Spleen (tissue), 13 donors: ENCODE measurements at regions of chr9 and their contacts with region 1.

Region 1: GRCh38 chr9:5437254-5438216 is at the start of gene PLGRKT:
- DNase-seq: peak; percentile 99
- H3K4me3 ChIP-seq: peak within 1 kb of the TSS; percentile 53 to 81 (median 63)
- H3K27ac ChIP-seq: peak within 1 kb of the TSS; percentile 91 to 97 (median 96)
- H3K4me1 ChIP-seq: peaks cover 17 to 40% (median 28%) of the 10 kb centered on the region in 6 donors
- H3K27me3 ChIP-seq: no peaks in the 10 kb centered on the region
- CTCF ChIP-seq: peak in 7 of 11 experiments; percentile 18 to 46 (median 41)
- POLR2A ChIP-seq: peak; percentile 52 to 86 (median 72)
- total RNA-seq, gene PLGRKT: 12.8 to 20.7 (median 17.5) TPM

Region 2: GRCh38 chr9:4740638-4741364 is 696.7 kb before region 1 on chr9 and contains the start of gene AK3:
- intact Hi-C with region 1: loop called (anchors 10 kb)
- DNase-seq: peak; percentile 98
- H3K4me3 ChIP-seq: peak within 1 kb of the TSS; percentile 55 to 94 (median 84)
- H3K27ac ChIP-seq: peak within 1 kb of the TSS; percentile 81 to 97 (median 92)
- H3K4me1 ChIP-seq: peaks cover 10 to 56% (median 38%) of the 10 kb centered on the region in 6 donors
- H3K27me3 ChIP-seq: no peaks in the 10 kb centered on the region
- CTCF ChIP-seq: peak in 6 of 11 experiments; percentile 13 to 45 (median 30)
- POLR2A ChIP-seq: peak in 2 of 3 donors; percentile 38 to 87
- total RNA-seq, gene AK3: 28.1 to 65.3 (median 51.3) TPM

Region 3: DNA sequence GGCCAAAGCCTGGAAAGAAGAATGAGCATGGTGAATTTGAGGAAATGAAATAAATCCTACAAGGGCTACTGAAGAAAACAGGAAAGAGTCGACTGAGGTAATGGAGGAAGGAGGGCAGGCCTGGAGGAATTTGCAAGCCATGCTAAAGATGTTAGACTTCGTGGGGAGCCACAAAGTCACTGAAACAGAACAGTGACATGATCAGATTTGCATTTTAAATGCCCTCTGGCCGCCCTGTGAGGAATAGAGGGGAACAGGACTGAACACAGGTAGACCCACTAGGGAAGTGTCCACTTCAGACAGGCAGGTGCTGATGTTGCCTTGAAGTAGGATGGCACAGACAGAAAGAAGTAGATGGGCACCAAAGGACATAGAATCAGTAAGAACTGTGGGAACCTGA is 55.1 kb before region 1 on chr9:
- intact Hi-C with region 1: no loop called
- DNase-seq: no peak
- H3K4me3 ChIP-seq: no peak overlapping the region
- H3K27ac ChIP-seq: no peak overlapping the region
- H3K4me1 ChIP-seq: no peaks in the 10 kb centered on the region
- H3K27me3 ChIP-seq: no peaks in the 10 kb centered on the region
- CTCF ChIP-seq: no peak
- POLR2A ChIP-seq: no peak

Region 4: GRCh38 chr9:5593904-5594303 is 156.4 kb after region 1 on chr9:
- intact Hi-C with region 1: loop called (anchors 5 kb)
- DNase-seq: no peak
- H3K4me3 ChIP-seq: no peak overlapping the region
- H3K27ac ChIP-seq: peak overlapping the region in 4 of 8 donors; percentile 33 to 62 (median 43)
- H3K4me1 ChIP-seq: peaks cover 8 to 56% (median 25%) of the 10 kb centered on the region in 6 donors
- H3K27me3 ChIP-seq: no peaks in the 10 kb centered on the region
- CTCF ChIP-seq: no peak
- POLR2A ChIP-seq: no peak